ENCODE measurements at regions of chr6 and their contacts with region 1.

Region 1: GRCh38 chr6:107716688-107717089 is 107.4 kb downstream of the SCML4 start:
- DNase-seq: peak; percentile 86
- H3K4me3 Mint-ChIP-seq: peak overlapping the region; percentile 64
- H3K27ac Mint-ChIP-seq: peak overlapping the region; percentile 84
- H3K4me1 Mint-ChIP-seq: peaks cover 70% of the 10 kb centered on the region
- H3K27me3 Mint-ChIP-seq: no peaks in the 10 kb centered on the region

Region 2: DNA sequence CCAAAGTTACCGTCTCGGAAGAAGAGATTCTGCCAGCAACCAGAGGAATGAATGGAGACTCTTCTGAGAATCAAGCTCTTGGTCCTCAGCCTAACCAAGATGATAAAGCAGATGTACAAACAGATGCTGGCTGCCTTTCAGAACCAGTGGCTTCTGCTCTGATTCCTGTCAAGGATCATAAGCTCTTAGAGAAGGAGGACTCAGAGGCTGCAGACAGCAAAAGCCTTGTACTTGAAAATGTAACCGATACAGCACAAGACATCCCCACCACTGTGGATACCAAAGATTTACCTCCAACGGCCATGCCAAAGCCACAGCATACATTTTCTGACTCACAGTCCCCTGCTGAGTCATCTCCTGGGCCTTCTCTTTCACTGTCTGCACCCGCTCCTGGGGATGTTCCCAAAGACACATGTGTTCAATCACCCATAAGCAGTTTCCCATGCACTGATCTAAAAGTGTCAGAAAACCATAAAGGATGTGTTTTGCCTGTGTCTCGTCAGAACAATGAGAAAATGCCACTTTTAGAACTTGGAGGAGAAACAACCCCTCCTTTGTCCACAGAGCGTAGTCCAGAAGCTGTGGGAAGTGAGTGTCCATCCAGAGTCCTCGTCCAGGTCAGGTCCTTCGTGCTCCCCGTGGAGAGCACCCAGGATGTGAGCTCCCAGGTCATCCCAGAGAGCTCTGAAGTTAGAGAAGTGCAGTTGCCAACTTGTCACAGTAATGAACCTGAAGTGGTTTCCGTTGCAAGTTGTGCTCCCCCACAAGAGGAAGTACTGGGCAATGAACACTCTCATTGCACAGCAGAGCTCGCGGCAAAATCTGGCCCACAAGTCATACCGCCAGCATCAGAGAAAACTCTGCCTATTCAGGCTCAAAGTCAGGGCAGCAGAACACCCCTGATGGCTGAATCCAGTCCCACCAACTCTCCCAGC is 1197.0 kb before region 1 on chr6:
- CTCF ChIA-PET with region 1: no interaction called
- POLR2A ChIA-PET with region 1: no interaction called
- intact Hi-C with region 1: loop called (anchors 10 kb)
- DNase-seq: peak; percentile 92
- H3K4me3 Mint-ChIP-seq: peak overlapping the region; percentile 76
- H3K27ac Mint-ChIP-seq: peak overlapping the region; percentile 99
- H3K4me1 Mint-ChIP-seq: peaks cover 67% of the 10 kb centered on the region
- H3K27me3 Mint-ChIP-seq: no peaks in the 10 kb centered on the region

Region 3: GRCh38 chr6:107064579-107065065 is 652.1 kb before region 1 on chr6:
- CTCF ChIA-PET with region 1: no interaction called
- POLR2A ChIA-PET with region 1: no interaction called
- intact Hi-C with region 1: loop called (anchors 2 kb)
- DNase-seq: peak; percentile 65
- H3K4me3 Mint-ChIP-seq: no peak overlapping the region
- H3K27ac Mint-ChIP-seq: peak overlapping the region; percentile 38
- H3K4me1 Mint-ChIP-seq: peaks cover 46% of the 10 kb centered on the region
- H3K27me3 Mint-ChIP-seq: no peaks in the 10 kb centered on the region

Region 4: GRCh38 chr6:107731422-107732319 is 15.0 kb after region 1 on chr6:
- CTCF ChIA-PET with region 1: interaction called, 16 read pairs
- POLR2A ChIA-PET with region 1: interaction called, 11 read pairs
- intact Hi-C with region 1: no loop called
- DNase-seq: peak; percentile 47
- H3K4me3 Mint-ChIP-seq: peak overlapping the region; percentile 75
- H3K27ac Mint-ChIP-seq: peak overlapping the region; percentile 74
- H3K4me1 Mint-ChIP-seq: peaks cover 83% of the 10 kb centered on the region
- H3K27me3 Mint-ChIP-seq: no peaks in the 10 kb centered on the region

Region 5: DNA sequence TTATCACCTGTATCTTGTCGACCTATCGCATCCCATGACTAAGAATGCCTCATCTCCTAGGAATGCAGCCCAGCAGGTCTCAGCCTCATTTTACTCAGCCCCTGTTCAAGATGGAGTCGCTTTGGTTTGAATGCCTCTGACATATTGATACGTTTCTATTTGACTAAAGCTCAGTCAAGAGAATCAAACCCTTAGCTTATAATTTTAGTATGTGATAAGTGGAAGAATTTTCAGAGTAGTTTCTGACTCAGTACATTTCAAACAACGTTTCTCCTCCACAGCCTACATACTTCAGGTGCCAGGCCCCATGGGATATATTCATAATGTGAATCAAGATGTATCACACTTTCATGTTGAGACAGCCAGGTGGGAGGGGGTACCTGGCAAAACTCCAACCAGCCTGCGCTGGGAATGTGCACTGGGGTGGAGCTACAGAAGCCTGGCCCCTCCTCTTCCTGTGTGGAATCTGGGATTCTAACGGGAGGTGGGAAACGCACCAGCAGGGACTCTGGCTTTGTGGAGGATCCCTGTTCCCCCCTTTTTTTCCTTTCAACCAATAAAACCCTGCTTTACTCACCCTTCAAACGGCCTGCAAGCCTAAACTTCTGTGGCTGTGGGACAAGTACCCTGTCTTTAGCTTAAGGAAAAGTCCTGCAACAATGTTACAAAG is 248.1 kb after region 1 on chr6:
- CTCF ChIA-PET with region 1: no interaction called
- POLR2A ChIA-PET with region 1: no interaction called
- intact Hi-C with region 1: loop called (anchors 2 kb)
- DNase-seq: peak; percentile 88
- H3K4me3 Mint-ChIP-seq: no peak overlapping the region
- H3K27ac Mint-ChIP-seq: peak overlapping the region; percentile 95
- H3K4me1 Mint-ChIP-seq: peaks cover 20% of the 10 kb centered on the region
- H3K27me3 Mint-ChIP-seq: no peaks in the 10 kb centered on the region

Region 6: GRCh38 chr6:108118810-108119768 is 402.4 kb after region 1 on chr6:
- CTCF ChIA-PET with region 1: no interaction called
- POLR2A ChIA-PET with region 1: no interaction called
- intact Hi-C with region 1: no loop called
- DNase-seq: no peak
- H3K4me3 Mint-ChIP-seq: peak overlapping the region; percentile 80
- H3K27ac Mint-ChIP-seq: no peak overlapping the region
- H3K4me1 Mint-ChIP-seq: peaks cover 47% of the 10 kb centered on the region
- H3K27me3 Mint-ChIP-seq: peaks cover 83% of the 10 kb centered on the region

Measured in activated CD4-positive, alpha-beta memory T cell treated with anti-CD3 and anti-CD28 coated beads for 36 hours (primary cell).